Activated B cell treated with CpG ODN at 0.5 μM for 24 hours (primary cell): ENCODE measurements at regions of chr6 and their contacts with region 1.

Region 1: DNA sequence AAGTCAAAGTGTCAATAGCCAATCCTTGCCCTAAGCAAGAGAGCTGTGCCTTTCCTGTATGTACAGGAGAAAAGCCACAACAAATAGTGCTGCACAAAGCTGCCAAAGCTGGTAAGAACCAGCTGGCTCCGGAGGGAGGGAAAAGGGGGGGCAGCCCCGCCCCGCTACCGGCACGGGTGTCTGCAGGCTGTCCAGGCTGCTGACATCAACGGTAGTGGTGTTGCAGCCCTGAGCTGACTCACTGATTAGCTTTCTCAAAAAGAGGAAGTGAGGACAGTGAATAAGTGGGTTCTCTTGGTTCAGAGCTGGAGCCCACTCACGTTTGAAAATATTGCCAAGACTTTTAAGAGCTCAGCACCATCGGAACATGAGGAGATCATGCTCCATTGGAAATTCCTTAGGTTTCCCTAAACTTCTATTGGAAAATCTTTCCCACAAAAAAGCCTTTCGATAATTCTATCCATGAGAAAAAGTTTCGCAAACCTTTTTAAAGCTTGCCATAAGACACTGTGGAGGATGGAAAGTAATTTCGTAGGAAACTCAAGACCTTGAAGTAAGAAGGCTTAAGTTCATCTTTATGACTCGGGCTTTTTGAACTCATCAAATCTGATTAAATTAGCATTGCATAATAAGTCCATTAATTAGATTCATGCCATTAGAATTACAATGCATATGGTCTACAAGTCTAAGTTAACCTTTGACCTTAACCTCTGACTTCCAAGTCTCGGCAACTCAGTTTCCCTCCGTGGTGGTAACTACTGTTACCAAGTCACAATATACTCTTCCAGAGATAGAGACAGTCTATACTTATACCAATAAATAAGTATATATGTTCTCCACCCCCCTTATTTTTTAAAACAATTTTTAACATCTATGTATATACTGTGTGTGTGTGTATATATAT is 67.0 kb downstream of the TNFRSF21 start:
- DNase-seq: peak; percentile 65
- ATAC-seq: peak; percentile 99
- H3K4me3 Mint-ChIP-seq: peak overlapping the region; percentile 59
- H3K27ac Mint-ChIP-seq: peak overlapping the region; percentile 83
- H3K4me1 Mint-ChIP-seq: peaks cover 36% of the 10 kb centered on the region
- H3K27me3 Mint-ChIP-seq: no peaks in the 10 kb centered on the region
- CTCF ChIP-seq: no peak

Region 2: DNA sequence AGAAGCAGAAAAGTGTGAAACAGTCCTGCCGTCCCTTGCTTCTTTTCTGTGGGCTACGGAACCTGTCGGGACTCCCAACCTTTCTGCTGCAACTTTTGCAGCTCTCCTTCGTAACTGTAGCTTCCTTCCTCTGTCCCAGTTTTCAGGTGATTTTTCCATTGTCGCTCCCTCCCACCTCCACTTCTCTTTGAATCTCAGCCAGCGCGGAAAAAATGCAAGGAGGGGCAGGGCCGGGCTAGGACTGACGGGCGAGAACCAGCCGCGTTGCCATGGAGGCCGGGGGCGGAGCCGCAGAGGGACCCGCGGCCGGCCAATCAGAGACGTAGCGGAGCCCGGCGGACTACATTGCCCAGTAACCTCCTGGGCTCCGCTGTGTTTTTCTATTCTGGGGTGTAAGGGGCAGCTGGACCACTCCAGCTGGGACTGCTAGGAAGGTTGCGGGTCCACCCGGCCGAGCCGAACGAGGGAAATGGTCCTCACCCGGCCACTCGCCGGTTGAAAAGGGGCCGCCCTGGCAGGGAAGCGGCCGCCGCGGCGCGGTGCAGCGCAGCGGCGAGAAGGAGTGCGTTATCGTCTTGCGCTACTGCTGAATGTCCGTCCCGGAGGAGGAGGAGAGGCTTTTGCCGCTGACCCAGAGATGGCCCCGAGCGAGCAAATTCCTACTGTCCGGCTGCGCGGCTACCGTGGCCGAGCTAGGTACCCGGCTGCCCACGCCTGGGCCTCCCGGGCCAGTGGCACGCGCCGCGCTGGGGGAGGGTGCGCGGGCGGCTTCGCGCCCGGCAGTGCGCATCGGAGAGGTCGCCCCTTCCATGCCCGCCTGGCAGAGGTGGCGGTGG is 589.9 kb before region 1 on chr6 and contains the starts of genes CYP39A1 and SLC25A27:
- CTCF ChIA-PET with region 1: no interaction called
- POLR2A ChIA-PET with region 1: no interaction called
- intact Hi-C with region 1: loop called (anchors 2 kb)
- DNase-seq: peak; percentile 79
- ATAC-seq: peak; percentile 99
- H3K4me3 Mint-ChIP-seq: peak within 1 kb of the TSS; percentile 86
- H3K27ac Mint-ChIP-seq: peak within 1 kb of the TSS; percentile 27
- H3K4me1 Mint-ChIP-seq: peaks cover 13% of the 10 kb centered on the region
- H3K27me3 Mint-ChIP-seq: peaks cover 41% of the 10 kb centered on the region
- CTCF ChIP-seq: no peak
- total RNA-seq, gene CYP39A1: not detected in 2 replicates
- total RNA-seq, gene SLC25A27: 0.29 and 0.78 TPM in 2 replicates

Region 3: GRCh38 chr6:47097092-47097945 is 145.4 kb before region 1 on chr6:
- CTCF ChIA-PET with region 1: interaction called, 3 read pairs
- POLR2A ChIA-PET with region 1: no interaction called
- intact Hi-C with region 1: loop called (anchors 2 kb)
- DNase-seq: no peak
- ATAC-seq: peak; percentile 67
- H3K4me3 Mint-ChIP-seq: no peak overlapping the region
- H3K27ac Mint-ChIP-seq: no peak overlapping the region
- H3K4me1 Mint-ChIP-seq: no peaks in the 10 kb centered on the region
- H3K27me3 Mint-ChIP-seq: no peaks in the 10 kb centered on the region
- CTCF ChIP-seq: no peak